ENCODE measurements at regions of chr11 and their contacts with region 1.

Region 1: GRCh38 chr11:1546536-1547400 is 25.3 kb downstream of the DUSP8 start:
- DNase-seq: peak in 1 of 2 experiments; percentile 71
- H3K4me3 ChIP-seq: peak overlapping the region; percentile 50; the same call in 1 of the 2 replicates
- H3K27ac ChIP-seq: no peak overlapping the region
- H3K4me1 ChIP-seq: no peaks in the 10 kb centered on the region; the same call in none of the 2 replicates
- H3K27me3 ChIP-seq: peaks cover 8% of the 10 kb centered on the region; the same call in 1 of the 2 replicates
- CTCF ChIP-seq: peak; percentile 73

Region 2: GRCh38 chr11:1559119-1559951 is 12.6 kb after region 1 on chr11:
- CTCF ChIA-PET with region 1: interaction called, 11 read pairs
- POLR2A ChIA-PET with region 1: interaction called, 3 read pairs
- intact Hi-C with region 1: no loop called
- DNase-seq: peak; percentile 79 to 92
- H3K4me3 ChIP-seq: peak overlapping the region; percentile 50; the same call in 1 of the 2 replicates
- H3K27ac ChIP-seq: 0 out of 2 replicates have a peak overlapping the region, but pooled peaks have one; percentile 14
- H3K4me1 ChIP-seq: peaks cover 29% of the 10 kb centered on the region
- H3K27me3 ChIP-seq: no peaks in the 10 kb centered on the region
- CTCF ChIP-seq: no peak

Region 3: DNA sequence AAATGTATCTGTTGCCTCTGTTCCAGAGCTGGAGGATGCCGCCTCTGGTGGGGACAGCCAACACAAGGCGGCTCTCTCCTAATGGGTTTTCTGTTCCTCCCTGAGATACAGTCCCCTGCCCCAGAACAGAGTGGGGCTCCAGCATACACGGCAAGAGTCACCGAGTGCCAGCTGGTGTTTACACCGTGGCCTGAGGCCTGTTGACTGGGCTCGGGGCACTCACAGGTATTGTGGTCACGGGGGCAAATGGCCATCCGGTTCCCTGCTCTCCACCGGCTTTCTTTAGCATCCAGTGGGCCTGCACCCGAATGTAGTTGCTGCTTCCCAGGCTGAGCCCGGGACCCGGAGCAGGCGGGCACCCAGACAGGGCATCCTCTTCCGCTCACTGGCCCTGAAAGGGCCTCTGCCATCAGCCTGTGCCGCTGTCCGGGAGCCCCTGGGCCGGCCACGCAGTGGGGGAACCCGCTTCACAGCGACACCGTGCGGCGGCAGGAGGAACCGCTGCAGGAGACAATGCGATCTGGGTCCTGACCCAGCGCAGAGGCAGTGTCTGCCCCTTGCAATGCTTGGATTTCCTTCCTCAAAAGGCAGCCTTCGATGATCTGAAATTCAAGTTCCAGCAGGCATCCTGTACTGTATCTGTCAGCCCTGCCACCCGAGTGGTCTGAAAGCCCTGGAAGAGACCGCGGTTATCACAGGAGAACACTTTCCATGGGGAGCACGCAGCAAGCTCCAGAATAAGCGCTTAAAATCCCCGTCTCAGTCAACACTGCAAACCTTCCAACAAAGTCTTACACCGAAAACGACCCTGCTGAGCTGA is 81.9 kb after region 1 on chr11:
- CTCF ChIA-PET with region 1: no interaction called
- POLR2A ChIA-PET with region 1: no interaction called
- intact Hi-C with region 1: loop called (anchors 5 kb)
- DNase-seq: peak in 1 of 2 experiments; percentile 52
- H3K4me3 ChIP-seq: no peak overlapping the region
- H3K27ac ChIP-seq: no peak overlapping the region
- H3K4me1 ChIP-seq: no peaks in the 10 kb centered on the region
- H3K27me3 ChIP-seq: peaks cover 71% of the 10 kb centered on the region
- CTCF ChIP-seq: peak; percentile 81

Region 4: DNA sequence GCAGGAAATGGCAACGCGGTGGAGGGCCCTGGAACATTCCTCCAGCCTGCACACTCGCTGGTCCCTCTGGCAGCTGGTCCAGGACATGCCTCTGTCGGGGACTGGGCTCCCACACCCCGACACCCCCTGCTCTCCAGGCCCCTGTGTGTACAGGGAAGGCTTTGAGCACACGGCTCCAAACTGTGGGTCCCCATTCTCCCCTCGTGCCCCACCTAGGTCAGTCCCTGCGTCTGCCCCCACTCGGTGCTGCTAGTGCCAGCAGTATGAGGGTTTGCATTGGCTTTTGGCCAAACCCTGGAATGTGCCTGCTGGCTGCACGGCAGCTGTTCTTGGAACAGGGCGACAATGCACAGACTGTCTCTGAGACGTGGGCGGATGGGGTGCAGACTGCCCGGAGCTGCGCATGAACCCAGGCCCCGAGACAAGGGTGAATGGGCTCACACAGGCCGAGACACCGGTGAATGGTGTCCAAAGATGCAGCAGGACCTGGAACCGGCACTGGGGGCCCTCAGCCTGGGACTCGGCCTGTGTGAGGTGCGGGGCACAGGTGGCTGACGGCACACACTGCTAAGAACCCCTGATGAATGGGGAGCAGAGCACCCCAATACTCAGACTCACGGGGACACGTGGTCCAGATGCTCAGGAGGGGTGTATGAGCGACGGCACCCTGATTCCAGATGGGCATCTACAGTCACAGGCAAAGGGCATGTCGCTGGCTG is 280.5 kb after region 1 on chr11:
- CTCF ChIA-PET with region 1: no interaction called
- POLR2A ChIA-PET with region 1: no interaction called
- intact Hi-C with region 1: loop called (anchors 10 kb)
- DNase-seq: peak; percentile 76 to 78
- H3K4me3 ChIP-seq: no peak overlapping the region
- H3K27ac ChIP-seq: no peak overlapping the region
- H3K4me1 ChIP-seq: peaks cover 54% of the 10 kb centered on the region
- H3K27me3 ChIP-seq: no peaks in the 10 kb centered on the region
- CTCF ChIP-seq: no peak; the same call in 1 of the 2 replicates